ENCODE measurements at regions of chr14 and their contacts with region 1.

Region 1: GRCh38 chr14:24299255-24300195 is at the starts of genes DHRS1 and NOP9:
- DNase-seq: peak; percentile 96
- H3K4me3 ChIP-seq: peak within 1 kb of the TSS; percentile 72 to 96 (median 84)
- H3K27ac ChIP-seq: peak within 1 kb of the TSS; percentile 89 to 94 (median 92)
- H3K4me1 ChIP-seq: peaks cover 18 to 43% (median 24%) of the 10 kb centered on the region in 4 donors
- H3K27me3 ChIP-seq: no peaks in the 10 kb centered on the region
- CTCF ChIP-seq: no peak
- EP300 ChIP-seq: no peak
- POLR2A ChIP-seq: peak; percentile 86
- total RNA-seq, gene DHRS1: 84.2 to 106 (median 94.6) TPM
- total RNA-seq, gene NOP9: 18.8 to 20.9 (median 19.3) TPM

Region 2: GRCh38 chr14:24135834-24136542 is 163.5 kb before region 1 on chr14 and contains the start of gene PSME1:
- in situ Hi-C with region 1: no loop called
- intact Hi-C with region 1: loop called (anchors 5 kb)
- DNase-seq: peak; percentile 97
- H3K4me3 ChIP-seq: peak within 1 kb of the TSS; percentile 70 to 98 (median 84)
- H3K27ac ChIP-seq: peak within 1 kb of the TSS; percentile 89 to 98 (median 95)
- H3K4me1 ChIP-seq: peaks cover 21 to 45% (median 30%) of the 10 kb centered on the region in 4 donors
- H3K27me3 ChIP-seq: no peaks in the 10 kb centered on the region
- CTCF ChIP-seq: no peak
- EP300 ChIP-seq: no peak
- POLR2A ChIP-seq: peak; percentile 63
- total RNA-seq, gene PSME1: 38.8 to 198 (median 132) TPM

Region 3: DNA sequence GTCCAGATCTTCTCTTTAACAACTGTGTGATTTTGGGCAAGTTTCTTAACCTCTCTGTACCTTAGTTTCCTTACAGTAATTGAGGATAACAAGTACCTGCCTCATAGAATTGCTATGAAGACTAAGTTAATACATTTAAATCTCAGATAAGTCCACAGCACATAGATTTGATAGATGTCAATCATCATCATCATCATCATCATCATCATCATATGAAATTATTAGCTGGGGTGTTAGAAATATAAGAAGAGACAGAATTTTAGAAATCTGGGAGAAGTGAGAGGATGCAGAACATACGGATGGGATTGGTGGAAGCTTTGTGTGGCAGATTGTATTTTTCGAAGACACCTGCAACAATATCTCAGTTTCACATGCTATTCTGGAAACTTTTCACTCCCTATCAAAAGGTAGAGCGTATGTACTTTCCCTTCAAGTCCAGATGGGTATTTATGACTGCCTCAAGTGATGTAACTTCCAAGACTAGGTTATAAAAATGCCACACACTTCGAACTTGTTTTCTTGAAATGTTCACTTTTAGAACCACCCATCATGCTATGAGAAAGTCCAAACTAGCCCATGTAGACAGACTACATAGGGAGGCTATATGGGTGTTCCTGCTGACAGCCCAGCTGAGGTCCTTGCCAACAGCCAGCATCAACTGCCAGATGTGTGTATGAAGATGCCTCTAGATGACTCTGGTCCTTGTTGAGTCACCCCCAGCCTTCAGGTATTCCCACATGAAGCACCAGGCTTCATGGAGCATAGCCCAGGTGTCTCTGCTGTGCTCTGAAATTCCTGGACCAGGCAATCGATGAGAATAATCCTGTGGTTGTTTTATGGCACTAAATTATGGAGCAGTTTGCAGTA is 163.7 kb after region 1 on chr14:
- in situ Hi-C with region 1: no loop called
- intact Hi-C with region 1: no loop called
- DNase-seq: no peak
- H3K4me3 ChIP-seq: no peak overlapping the region
- H3K27ac ChIP-seq: no peak overlapping the region
- H3K4me1 ChIP-seq: no peaks in the 10 kb centered on the region
- H3K27me3 ChIP-seq: no peaks in the 10 kb centered on the region
- CTCF ChIP-seq: no peak
- EP300 ChIP-seq: no peak
- POLR2A ChIP-seq: no peak